Activated CD8-positive, alpha-beta T cell treated with anti-CD3 and anti-CD28 coated beads, Interleukin-2, amount 10 ng/mL, durations not matched to agents 7 days and 5 days (primary cell): ENCODE measurements at regions of chr14 and their contacts with region 1.

Region 1: DNA sequence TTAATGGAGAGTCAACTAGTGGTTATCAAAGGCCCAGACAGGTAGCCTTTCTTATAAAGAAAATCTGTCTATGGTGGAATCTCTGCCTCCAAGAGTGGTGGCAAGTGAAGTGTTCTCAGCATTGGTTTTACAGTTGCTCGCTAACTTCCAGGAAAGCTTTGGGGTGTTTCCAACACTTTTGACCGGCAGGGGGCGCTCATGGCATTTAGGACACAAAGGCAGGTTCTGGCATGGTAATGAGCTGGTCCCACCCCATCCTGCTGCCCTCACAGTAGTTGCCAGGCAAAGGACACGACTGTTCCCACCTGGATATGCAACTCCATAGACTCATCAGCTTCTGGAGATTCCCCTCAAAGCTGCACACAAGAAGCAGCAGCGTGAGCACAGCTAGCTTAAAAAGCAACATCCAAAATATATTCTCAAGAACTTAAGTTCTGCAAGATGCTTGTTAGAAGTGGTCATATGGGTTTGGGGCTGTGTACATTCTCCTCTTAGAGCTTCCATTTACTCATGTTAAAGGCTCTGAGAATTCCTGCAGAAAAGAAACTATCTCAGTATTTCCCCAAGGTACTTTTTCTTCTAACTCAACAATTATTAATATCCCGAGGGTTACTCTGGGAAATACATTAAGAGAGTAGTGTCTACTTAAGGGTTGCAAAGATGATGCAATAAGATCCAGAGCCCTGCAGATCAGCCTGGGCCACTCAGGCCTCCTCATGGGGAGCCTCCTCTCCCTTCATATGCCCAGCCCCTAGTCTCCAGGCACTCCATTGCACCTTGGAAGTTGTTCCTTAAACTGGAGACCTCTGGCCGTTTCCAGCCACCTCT is 14.8 kb downstream of the PROX2 start:
- DNase-seq: peak; percentile 94
- ATAC-seq: peak; percentile 87
- H3K4me3 Mint-ChIP-seq: no peak overlapping the region
- H3K27ac Mint-ChIP-seq: no peak overlapping the region
- H3K4me1 Mint-ChIP-seq: peaks cover 11% of the 10 kb centered on the region
- H3K27me3 Mint-ChIP-seq: no peaks in the 10 kb centered on the region

Region 2: DNA sequence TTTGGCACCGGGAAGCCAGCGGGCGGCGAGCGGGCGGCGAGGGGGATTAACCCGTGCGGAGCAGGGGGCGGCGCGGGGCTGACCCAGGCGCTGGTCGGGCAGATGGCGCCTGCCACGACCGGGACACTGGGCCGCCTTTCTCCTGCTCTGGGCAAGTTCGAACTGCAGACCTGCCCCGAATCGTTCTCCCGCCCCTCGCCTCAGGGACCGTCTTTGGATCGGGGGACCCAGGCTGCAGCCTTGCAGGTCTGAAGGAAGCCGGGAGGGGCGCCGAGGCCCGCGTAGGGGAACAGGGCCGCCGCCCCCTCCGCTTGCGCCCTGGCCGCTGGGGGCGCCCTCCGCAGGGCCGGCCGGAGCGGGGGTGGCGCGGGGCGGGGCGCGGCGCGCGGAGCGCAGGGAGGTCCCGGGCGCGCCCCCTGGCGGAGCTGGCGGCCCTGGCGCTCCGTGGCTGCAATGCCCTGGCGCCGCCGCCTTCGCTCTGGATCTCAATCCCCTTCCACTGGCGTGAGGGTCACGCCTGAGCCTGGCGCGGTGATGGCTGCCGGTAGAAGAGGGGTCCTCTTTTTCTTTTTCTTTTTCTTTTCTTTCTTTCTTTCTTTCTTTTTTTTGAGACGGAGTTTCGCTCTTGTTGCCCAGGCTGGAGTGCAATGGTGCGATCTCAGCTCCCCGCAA is 248.6 kb before region 1 on chr14:
- CTCF ChIA-PET with region 1: interaction called, 18 read pairs
- POLR2A ChIA-PET with region 1: no interaction called
- DNase-seq: peak; percentile 84
- ATAC-seq: peak; percentile 90
- H3K4me3 Mint-ChIP-seq: peak overlapping the region; percentile 73
- H3K27ac Mint-ChIP-seq: no peak overlapping the region
- H3K4me1 Mint-ChIP-seq: peaks cover 22% of the 10 kb centered on the region
- H3K27me3 Mint-ChIP-seq: peaks cover 49% of the 10 kb centered on the region

Region 3: DNA sequence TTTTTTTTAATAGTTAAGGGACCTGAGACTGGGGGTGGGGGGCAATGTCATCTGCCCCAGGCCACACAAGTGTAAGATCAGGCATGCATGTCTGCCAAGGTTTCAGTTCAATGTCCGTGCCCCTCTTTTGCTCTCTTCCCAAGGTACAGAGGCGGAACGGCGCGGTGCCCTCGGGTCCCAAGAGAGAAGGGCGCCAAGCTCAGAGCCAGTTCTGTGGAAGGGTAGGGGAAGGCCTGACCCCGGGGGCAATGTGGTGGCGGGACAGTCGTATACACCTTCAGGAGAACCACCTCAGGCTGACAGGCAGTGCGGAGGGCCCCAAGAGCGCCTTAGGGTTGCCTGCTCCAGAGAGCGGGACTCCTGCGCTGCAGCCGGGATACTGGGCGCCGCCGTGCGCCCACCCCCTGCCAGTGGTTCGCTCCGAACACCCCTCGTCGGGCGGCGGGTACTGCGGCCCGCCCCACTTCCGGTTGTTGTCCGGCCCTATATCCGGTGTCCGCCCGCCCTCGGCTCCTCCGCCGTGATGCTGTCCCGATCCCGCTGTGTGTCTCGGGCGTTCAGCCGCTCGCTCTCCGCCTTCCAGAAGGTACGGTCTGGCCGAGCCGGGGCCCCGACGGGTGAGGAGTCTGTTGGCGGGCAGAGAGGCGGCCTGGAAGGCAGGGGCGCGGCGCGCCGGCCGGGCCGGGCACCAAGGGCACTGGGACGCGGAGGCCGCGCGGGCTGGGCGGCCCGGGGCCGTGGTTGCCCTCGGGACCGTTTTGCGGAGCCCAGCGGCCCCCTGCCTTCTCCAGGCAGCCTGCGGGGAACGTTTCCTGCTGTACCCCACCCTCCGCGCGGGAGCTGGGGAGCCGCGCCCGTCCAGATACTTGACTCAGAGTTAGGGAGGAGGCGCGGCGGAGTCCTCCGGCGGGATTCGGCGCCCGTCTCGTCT is 20.6 kb after region 1 on chr14 and contains the start of gene DLST:
- CTCF ChIA-PET with region 1: interaction called, 186 read pairs
- POLR2A ChIA-PET with region 1: interaction called, 31 read pairs
- DNase-seq: peak; percentile 89
- ATAC-seq: peak; percentile 90
- H3K4me3 Mint-ChIP-seq: peak within 1 kb of the TSS; percentile 98
- H3K27ac Mint-ChIP-seq: peak within 1 kb of the TSS; percentile 98
- H3K4me1 Mint-ChIP-seq: peaks cover 59% of the 10 kb centered on the region
- H3K27me3 Mint-ChIP-seq: no peaks in the 10 kb centered on the region
- total RNA-seq, gene DLST: 106 to 108 TPM

Region 4: DNA sequence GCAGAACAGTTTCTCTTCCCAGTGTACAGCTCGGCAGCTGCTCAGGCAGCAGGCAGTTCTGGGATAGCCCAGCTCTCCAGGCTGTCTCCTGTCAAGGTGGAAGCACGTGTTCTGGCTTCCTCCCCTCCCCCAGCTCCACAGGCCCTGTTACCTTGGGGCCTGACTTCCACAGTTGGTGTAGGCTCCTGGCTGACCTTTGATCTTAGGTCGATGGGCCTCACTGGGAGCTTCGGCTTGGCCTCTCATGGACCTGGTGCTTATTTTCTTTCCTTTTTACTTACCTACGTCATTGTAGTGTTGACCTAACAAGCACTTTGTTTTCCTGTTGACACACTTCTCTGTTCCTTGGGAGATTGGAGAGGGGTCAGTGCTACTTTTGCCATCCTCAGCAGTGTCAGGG is 37.6 kb after region 1 on chr14:
- CTCF ChIA-PET with region 1: interaction called, 552 read pairs
- POLR2A ChIA-PET with region 1: no interaction called
- DNase-seq: no peak
- ATAC-seq: no peak
- H3K4me3 Mint-ChIP-seq: no peak overlapping the region
- H3K27ac Mint-ChIP-seq: no peak overlapping the region
- H3K4me1 Mint-ChIP-seq: peaks cover 9% of the 10 kb centered on the region
- H3K27me3 Mint-ChIP-seq: no peaks in the 10 kb centered on the region

Region 5: GRCh38 chr14:74922739-74923401 is 61.8 kb after region 1 on chr14 and contains the start of gene RPS6KL1:
- CTCF ChIA-PET with region 1: interaction called, 19 read pairs
- POLR2A ChIA-PET with region 1: no interaction called
- DNase-seq: peak; percentile 85
- ATAC-seq: peak; percentile 99
- H3K4me3 Mint-ChIP-seq: peak within 1 kb of the TSS; percentile 58
- H3K27ac Mint-ChIP-seq: peak within 1 kb of the TSS; percentile 27
- H3K4me1 Mint-ChIP-seq: peaks cover 10% of the 10 kb centered on the region
- H3K27me3 Mint-ChIP-seq: peaks cover 19% of the 10 kb centered on the region
- total RNA-seq, gene RPS6KL1: 4.3 to 5.2 TPM

Region 6: DNA sequence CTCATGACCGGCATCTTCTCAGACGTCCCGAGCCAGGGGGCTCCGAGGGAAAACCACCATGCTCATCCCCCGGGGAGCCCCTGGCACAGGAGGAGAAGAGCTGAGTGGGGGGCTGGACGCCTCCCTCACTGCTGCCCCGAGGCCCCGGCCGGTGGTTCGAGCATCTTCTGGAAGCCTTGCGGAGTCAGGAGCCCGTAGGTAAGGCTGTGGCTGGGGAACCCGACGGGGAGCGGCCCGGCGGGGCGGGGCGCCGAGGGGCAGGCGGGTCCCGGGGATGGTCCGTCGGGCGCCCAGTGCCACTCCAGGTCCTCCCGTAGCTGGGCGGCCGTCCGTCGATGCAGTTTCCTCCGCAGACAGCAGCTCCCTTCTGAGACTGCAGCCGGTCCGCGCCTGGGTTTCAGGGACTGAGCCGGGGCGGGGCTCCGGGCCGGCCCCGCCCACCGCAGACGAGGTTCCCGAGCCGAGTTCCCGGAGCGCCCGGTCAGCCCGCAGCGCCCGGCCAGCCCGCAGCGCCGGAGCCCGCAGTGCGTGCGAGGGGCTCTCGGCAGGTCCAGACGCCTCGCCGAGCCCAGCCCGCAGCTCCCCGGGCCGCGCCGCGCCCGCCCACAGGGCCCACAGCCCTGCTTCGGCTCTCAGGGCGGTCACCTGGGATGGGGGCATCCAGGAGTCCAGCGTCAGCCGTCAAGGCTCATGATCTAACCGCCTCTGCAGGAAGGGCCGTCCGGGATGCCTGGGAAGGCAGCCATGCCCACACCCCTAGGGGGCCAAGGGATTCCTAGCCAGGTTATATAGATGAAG is 94.3 kb after region 1 on chr14 and contains the start of gene PGF:
- CTCF ChIA-PET with region 1: interaction called, 10 read pairs
- POLR2A ChIA-PET with region 1: no interaction called
- DNase-seq: peak; percentile 40
- ATAC-seq: peak; percentile 76
- H3K4me3 Mint-ChIP-seq: peak within 1 kb of the TSS; percentile 38
- H3K27ac Mint-ChIP-seq: no peak within 1 kb of the TSS
- H3K4me1 Mint-ChIP-seq: peaks cover 8% of the 10 kb centered on the region
- H3K27me3 Mint-ChIP-seq: peaks cover 12% of the 10 kb centered on the region
- total RNA-seq, gene PGF: 0.21 TPM in 1 of 2 experiments, not detected in the other

Region 7: DNA sequence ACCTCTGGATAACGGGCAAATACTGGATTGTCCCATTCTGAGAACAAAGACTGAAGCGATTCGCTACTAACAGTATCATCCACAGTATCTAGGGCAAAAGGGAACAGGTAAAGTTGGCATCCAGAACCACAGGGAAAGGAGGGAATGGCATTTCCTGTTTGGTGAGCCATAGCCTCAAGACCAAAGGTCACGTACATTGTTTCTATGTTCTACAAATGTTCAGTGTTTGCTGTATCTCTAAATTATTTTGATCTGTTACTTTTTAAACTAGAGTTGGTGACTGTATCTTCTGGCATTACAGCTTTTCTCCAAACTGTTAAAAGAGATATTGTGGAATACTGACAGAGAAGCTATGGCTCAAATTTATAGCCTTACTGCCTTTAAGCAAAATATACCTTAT is 180.5 kb after region 1 on chr14:
- CTCF ChIA-PET with region 1: no interaction called
- POLR2A ChIA-PET with region 1: no interaction called
- DNase-seq: no peak
- ATAC-seq: no peak
- H3K4me3 Mint-ChIP-seq: no peak overlapping the region
- H3K27ac Mint-ChIP-seq: no peak overlapping the region
- H3K4me1 Mint-ChIP-seq: peaks cover 5% of the 10 kb centered on the region
- H3K27me3 Mint-ChIP-seq: no peaks in the 10 kb centered on the region

Region 8: GRCh38 chr14:75088574-75089373 is 227.7 kb after region 1 on chr14:
- CTCF ChIA-PET with region 1: interaction called, 86 read pairs
- POLR2A ChIA-PET with region 1: interaction called, 3 read pairs
- DNase-seq: peak; percentile 65
- ATAC-seq: peak; percentile 69
- H3K4me3 Mint-ChIP-seq: no peak overlapping the region
- H3K27ac Mint-ChIP-seq: no peak overlapping the region
- H3K4me1 Mint-ChIP-seq: no peaks in the 10 kb centered on the region
- H3K27me3 Mint-ChIP-seq: no peaks in the 10 kb centered on the region